ENCODE measurements at regions of chr19 and their contacts with region 1.

Region 1: GRCh38 chr19:43639519-43640423 is at the start of gene CADM4:
- DNase-seq: peak; percentile 40 to 48
- ATAC-seq: peak; percentile 89
- total RNA-seq, gene CADM4: 2.0 to 4.9 TPM

Region 2: DNA sequence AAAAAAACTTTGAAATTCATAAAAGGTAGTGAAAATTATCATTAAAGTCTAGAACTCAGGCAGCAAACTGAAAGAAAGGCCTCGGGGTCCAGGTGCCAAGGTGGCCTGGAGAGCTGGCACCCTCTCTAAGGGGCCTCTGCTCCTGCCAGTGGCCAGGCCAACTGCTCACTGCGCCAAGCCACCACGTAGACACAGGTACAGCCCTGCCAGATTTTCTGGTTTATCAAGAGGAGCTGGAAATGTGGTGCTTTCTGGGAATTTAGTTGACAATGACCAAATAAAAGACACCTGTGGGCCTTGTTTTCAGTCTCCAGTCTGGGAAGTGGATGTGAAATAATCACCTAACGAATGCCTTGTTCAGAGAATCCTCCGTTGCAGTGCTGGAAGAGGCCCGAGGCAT is 1541.0 kb before region 1 on chr19:
- intact Hi-C with region 1: no loop called
- DNase-seq: no peak
- ATAC-seq: no peak

Region 3: GRCh38 chr19:43555185-43555770 is 84.5 kb before region 1 on chr19:
- intact Hi-C with region 1: loop called in 1 of 2 experiments (anchors 5 kb)
- DNase-seq: peak; percentile 54 to 87
- ATAC-seq: peak; percentile 87

Region 4: GRCh38 chr19:43711751-43712355 is 72.1 kb after region 1 on chr19:
- intact Hi-C with region 1: no loop called
- DNase-seq: no peak
- ATAC-seq: peak; percentile 83

Measured in left colon (tissue), 2 donors.